ENCODE measurements at regions of chr7 and their contacts with region 1.

Region 1: GRCh38 chr7:130486114-130486958 is 5.5 kb upstream of the MEST start:
- DNase-seq: peak; percentile 32 to 70 (median 60)
- ATAC-seq: peak in 3 of 4 donors; percentile 76 to 78 (median 78)
- H3K4me3 ChIP-seq: peak overlapping the region in 11 of 12 donors; percentile 34 to 57 (median 53)
- H3K27ac ChIP-seq: no peak overlapping the region
- H3K4me1 ChIP-seq: peaks cover 0 to 29% (median 13%) of the 10 kb centered on the region in 12 donors
- H3K27me3 ChIP-seq: peaks cover 0 to 39% (median 13%) of the 10 kb centered on the region in 9 donors
- CTCF ChIP-seq: peak; percentile 58 to 81 (median 70)
- POLR2A ChIP-seq: no peak

Region 2: DNA sequence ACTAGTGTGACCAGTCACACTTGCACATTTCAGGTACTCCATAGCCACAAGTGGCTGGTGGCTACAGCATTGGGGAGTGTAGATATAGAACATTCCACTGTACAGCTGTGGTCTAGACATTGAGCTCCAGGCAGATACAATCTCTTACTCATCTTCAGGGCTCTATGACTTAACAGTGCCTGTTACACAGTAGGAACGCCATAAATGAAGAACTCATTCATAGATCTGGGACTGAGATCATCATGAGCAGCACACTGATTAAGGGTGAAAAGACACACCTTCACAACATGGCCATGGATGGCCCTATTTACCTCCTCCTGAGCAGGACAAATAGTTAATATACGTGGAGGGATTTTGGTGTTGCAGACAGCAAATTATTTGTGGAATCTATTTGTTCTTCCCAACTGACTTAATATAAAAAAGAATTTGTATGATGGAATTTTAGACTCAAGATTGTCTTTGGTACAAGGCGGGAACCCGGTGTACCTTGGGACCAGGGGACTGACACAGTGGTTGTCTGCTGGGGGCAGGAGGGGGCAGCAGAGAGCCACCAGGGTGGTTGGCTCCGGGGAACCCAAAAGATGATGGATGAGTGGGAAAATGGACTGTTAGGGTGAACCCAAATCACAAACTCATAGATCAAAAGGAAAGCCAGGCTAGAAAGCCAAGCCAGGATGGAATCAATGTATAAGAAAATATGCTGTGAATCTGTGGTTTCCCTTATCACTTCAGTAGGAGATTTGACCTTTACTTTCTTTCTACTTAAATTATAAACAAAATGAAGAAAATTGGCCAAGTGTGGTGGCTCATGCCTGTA is 243.9 kb before region 1 on chr7:
- intact Hi-C with region 1: loop called in 1 of 10 experiments (anchors 10 kb)
- DNase-seq: peak; percentile 44 to 71 (median 51)
- ATAC-seq: peak in 3 of 4 donors; percentile 77 to 85 (median 80)
- H3K4me3 ChIP-seq: no peak overlapping the region
- H3K27ac ChIP-seq: no peak overlapping the region
- H3K4me1 ChIP-seq: peaks cover 0 to 11% (median 0%) of the 10 kb centered on the region in 12 donors
- H3K27me3 ChIP-seq: no peaks in the 10 kb centered on the region
- CTCF ChIP-seq: peak; percentile 66 to 89 (median 75)
- POLR2A ChIP-seq: no peak

Region 3: GRCh38 chr7:130277763-130278643 is 208.3 kb before region 1 on chr7:
- intact Hi-C with region 1: loop called in 6 of 10 experiments (anchors 5 to 10 kb)
- DNase-seq: peak in 4 of 5 donors; percentile 47 to 57 (median 55)
- ATAC-seq: peak; percentile 37 to 88 (median 85)
- H3K4me3 ChIP-seq: no peak overlapping the region
- H3K27ac ChIP-seq: peak overlapping the region in 2 of 12 donors; percentile 12 to 16
- H3K4me1 ChIP-seq: peaks cover 0 to 15% (median 3%) of the 10 kb centered on the region in 12 donors
- H3K27me3 ChIP-seq: peaks cover 0 to 21% (median 0%) of the 10 kb centered on the region in 9 donors
- CTCF ChIP-seq: peak; percentile 42 to 82 (median 60)
- POLR2A ChIP-seq: no peak

Region 4: GRCh38 chr7:130668257-130669084 is 182.1 kb after region 1 on chr7 and contains the start of gene COPG2:
- intact Hi-C with region 1: loop called in 2 of 10 experiments (anchors 10 kb)
- DNase-seq: peak; percentile 87 to 93 (median 91)
- ATAC-seq: peak; percentile 98 to 100 (median 98)
- H3K4me3 ChIP-seq: peak within 1 kb of the TSS; percentile 56 to 93 (median 74)
- H3K27ac ChIP-seq: peak within 1 kb of the TSS; percentile 66 to 95 (median 87)
- H3K4me1 ChIP-seq: peaks cover 0 to 24% (median 8%) of the 10 kb centered on the region in 12 donors
- H3K27me3 ChIP-seq: no peaks in the 10 kb centered on the region
- CTCF ChIP-seq: peak in 1 of 12 donors; percentile 5
- POLR2A ChIP-seq: peak in 1 of 2 donors; percentile 67
- total RNA-seq, gene COPG2: 14.6 to 26.9 (median 19.5) TPM

Region 5: DNA sequence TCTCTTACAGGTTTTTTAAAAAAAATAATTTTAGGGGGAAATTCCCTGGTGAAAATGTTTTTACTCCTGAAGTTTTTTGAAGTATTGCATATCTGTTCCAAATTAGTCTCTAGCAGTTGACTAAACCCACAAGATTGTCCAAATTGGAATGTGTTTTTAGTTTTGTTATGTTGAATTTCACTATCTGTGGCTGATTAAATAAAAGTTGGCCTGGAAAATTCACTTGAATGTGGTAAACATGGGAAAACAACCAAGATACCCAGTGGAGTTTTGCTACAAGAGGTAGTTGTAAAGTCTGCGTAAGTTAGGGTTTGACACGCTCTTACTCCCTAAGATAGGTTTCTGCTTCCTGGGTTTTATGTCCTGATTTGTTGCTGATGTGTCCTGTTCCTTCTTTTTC is 196.7 kb after region 1 on chr7:
- intact Hi-C with region 1: loop called in 2 of 10 experiments (anchors 10 kb)
- DNase-seq: no peak
- ATAC-seq: no peak
- H3K4me3 ChIP-seq: no peak overlapping the region
- H3K27ac ChIP-seq: no peak overlapping the region
- H3K4me1 ChIP-seq: no peaks in the 10 kb centered on the region
- H3K27me3 ChIP-seq: no peaks in the 10 kb centered on the region
- CTCF ChIP-seq: no peak
- POLR2A ChIP-seq: no peak

Region 6: DNA sequence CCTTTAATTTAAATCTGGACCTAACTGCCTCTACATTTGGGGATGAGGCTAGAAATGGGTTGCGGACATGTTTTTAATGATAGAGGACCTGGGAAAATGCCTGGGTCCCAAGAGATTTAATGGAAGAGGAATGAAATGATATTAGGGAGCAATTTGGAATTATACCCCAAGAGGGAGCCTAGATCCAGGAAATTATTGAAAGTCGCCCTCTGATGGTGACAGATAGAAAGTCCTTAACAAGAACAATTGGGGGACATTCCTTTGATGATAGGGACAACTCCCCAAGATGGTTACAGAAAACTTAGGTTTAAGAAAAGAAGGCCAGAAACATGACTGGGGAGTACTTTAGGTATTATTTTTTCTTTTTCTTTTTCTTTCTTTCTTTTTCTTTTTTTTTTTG is 209.5 kb after region 1 on chr7:
- intact Hi-C with region 1: loop called in 1 of 10 experiments (anchors 10 kb)
- DNase-seq: no peak
- ATAC-seq: no peak
- H3K4me3 ChIP-seq: no peak overlapping the region
- H3K27ac ChIP-seq: no peak overlapping the region
- H3K4me1 ChIP-seq: no peaks in the 10 kb centered on the region
- H3K27me3 ChIP-seq: no peaks in the 10 kb centered on the region
- CTCF ChIP-seq: peak; percentile 9 to 55 (median 39)
- POLR2A ChIP-seq: no peak

Region 7: GRCh38 chr7:130721486-130722280 is 235.3 kb after region 1 on chr7:
- intact Hi-C with region 1: loop called in 3 of 10 experiments (anchors 2 to 5 kb)
- DNase-seq: peak; percentile 69 to 84 (median 79)
- ATAC-seq: peak; percentile 87 to 98 (median 95)
- H3K4me3 ChIP-seq: no peak overlapping the region
- H3K27ac ChIP-seq: no peak overlapping the region
- H3K4me1 ChIP-seq: peaks cover 0 to 7% (median 0%) of the 10 kb centered on the region in 12 donors
- H3K27me3 ChIP-seq: peaks cover 0 to 15% (median 0%) of the 10 kb centered on the region in 9 donors
- CTCF ChIP-seq: peak; percentile 48 to 85 (median 76)
- POLR2A ChIP-seq: no peak